Esophagus muscularis mucosa (tissue), 4 donors: ENCODE measurements at regions of chr12 and their contacts with region 1.

Region 1: DNA sequence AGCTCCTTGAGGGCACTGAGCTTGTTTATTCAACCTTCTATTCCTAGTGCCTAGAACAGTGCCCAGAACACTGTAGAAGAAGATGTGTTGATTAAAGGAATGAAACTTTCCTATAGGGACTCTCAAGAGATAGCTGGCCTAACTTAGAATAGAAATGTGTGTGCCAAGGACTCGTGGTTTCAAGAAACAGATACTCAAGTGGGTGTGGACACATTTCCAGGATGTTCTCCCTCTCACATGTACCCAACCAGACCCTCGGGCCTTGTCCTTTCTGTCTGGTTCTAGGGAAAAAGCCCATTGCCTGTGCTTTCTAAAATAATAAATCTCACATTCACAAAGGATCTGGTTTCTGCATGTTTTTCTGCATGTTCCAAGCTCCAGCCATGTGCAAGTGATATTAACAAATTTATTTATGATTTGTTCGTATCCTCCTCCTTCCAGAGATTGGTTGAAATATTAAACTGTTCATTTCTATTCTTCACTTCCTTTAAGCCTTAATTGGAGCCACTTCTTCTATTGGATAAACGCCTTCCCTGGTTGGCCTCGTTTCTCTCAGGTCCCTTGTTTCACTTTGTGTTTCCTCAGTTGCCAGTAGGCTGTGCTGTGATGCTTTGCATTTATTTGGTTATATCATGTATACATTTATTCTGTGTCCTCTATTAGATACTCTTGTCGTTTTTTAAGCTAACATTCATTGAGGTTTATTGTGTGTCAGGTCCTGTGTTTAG is 89.8 kb downstream of the CRADD start:
- DNase-seq: no peak
- H3K4me3 ChIP-seq: no peak overlapping the region
- H3K27ac ChIP-seq: peak overlapping the region; percentile 45 to 62 (median 53)
- H3K4me1 ChIP-seq: peaks cover 20 to 34% (median 26%) of the 10 kb centered on the region in 4 donors
- H3K27me3 ChIP-seq: no peaks in the 10 kb centered on the region
- CTCF ChIP-seq: peak; percentile 56 to 72 (median 67)
- EP300 ChIP-seq: no peak
- POLR2A ChIP-seq: no peak

Region 2: DNA sequence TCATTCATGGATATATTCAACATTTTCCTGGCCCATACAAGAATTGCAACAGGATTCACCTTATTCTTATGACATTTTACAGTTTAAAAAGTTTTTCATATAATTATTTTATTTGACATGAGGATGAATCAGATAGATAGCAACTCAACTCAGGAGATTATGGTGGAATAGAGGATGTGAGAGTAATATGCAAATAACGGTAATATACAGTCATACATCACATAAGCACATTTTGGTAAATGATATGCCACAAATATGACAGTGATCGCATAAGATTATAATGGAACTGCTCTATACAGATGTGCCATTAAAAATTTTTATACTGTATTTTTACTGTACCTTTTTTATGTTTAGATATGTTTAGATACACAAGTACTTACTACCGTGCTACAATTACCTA is 113.9 kb before region 1 on chr12:
- intact Hi-C with region 1: no loop called
- DNase-seq: no peak
- H3K4me3 ChIP-seq: no peak overlapping the region
- H3K27ac ChIP-seq: no peak overlapping the region
- H3K4me1 ChIP-seq: no peaks in the 10 kb centered on the region
- H3K27me3 ChIP-seq: no peaks in the 10 kb centered on the region
- CTCF ChIP-seq: no peak
- EP300 ChIP-seq: no peak
- POLR2A ChIP-seq: no peak

Region 3: GRCh38 chr12:93979189-93979588 is 212.2 kb after region 1 on chr12:
- intact Hi-C with region 1: loop called (anchors 2 kb)
- DNase-seq: no peak
- H3K4me3 ChIP-seq: no peak overlapping the region
- H3K27ac ChIP-seq: no peak overlapping the region
- H3K4me1 ChIP-seq: peaks cover 0 to 11% (median 7%) of the 10 kb centered on the region in 4 donors
- H3K27me3 ChIP-seq: no peaks in the 10 kb centered on the region
- CTCF ChIP-seq: peak; percentile 48 to 56 (median 56)
- EP300 ChIP-seq: no peak
- POLR2A ChIP-seq: no peak

Region 4: DNA sequence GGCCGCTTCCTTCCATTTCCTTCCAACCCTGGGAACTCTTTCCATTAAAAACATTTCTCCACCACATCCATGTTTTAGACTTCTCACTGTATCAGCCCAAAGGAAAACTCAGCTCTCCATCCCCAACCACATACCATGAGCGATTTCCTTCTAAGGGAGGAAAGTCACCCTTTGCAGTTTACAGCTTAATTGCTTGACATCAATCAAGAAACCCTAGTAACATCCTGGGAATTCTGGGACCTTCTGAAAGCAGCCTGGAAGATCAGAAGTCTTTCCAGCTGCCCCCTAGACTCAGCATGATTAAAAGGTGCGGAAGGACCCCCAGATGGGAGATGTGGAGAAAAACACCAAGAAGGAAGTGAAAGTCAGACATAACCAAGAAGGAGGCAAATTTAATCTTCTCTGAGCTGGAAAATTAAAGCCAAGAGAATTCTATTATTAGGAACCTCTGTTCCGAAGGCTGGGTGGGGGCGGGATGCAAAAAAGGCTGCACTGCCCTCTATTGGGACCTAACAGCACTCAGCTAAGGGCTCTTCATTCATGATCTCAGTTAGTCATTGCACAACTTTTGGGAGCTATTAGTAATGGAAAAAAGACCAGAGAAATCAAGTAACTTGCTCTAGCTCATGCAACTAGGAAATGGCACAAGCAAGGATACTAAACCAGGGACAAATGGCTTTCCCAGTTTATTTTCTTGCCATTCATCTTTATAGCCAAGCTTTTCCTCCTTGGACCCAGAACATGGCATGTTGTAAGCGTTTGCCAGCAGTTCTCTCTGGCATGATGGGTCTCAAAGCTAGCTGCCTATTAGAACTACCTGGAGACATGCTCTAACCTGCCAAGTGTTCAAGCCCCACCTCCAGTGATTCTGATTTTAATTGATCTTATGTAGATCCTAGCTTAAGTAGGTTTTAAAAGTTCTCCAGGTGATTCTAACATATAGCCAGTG is 308.3 kb after region 1 on chr12:
- intact Hi-C with region 1: loop called (anchors 10 kb)
- DNase-seq: no peak
- H3K4me3 ChIP-seq: peak overlapping the region in 1 of 4 donors; percentile 6
- H3K27ac ChIP-seq: peak overlapping the region; percentile 74 to 77 (median 76)
- H3K4me1 ChIP-seq: peaks cover 15 to 28% (median 27%) of the 10 kb centered on the region in 4 donors
- H3K27me3 ChIP-seq: no peaks in the 10 kb centered on the region
- CTCF ChIP-seq: peak; percentile 63 to 71 (median 66)
- EP300 ChIP-seq: no peak
- POLR2A ChIP-seq: no peak

Region 5: DNA sequence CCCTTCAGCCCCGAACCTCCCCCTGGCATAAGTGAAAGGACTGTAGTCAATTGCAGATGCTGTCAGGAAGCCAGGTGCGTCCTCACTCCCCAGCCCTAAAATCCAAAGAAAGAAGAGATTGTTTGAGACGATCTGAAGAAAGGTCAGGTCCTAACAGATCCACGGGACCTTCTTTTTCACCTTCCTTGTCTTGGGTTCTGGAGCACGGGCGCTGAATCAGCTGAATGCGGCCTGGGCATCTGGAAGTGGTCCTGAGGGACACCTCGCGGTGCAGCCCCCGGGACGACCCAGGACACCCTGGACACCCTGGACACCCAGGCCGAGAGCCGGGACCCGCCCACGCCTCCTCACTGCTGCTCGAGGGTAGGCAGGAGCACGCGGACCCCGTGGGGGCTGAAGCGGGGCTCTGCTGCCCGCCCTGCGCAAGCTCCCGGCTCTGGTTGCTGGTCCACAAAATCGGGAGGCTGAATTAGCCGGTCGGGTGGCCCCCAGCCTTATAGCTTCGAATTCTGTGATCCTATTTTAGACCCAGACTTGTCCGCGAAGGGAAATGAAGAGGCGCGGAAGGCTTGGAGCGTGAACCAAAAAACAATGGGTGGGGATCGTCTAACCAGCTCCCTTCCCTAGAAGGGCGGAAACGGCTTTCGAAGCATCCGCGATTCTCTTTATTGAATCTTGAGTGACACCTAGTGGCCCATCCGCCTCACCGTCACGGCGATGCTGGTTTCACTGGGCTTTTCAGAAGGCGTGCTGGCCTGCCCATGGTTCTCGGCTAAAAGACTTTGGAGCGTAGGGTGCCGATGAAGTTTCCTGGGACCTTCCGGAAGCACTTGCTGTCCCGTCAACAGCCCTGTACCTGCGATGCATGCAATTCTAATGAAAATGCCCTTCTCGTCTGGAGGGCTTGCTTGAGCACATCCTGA is 335.0 kb after region 1 on chr12:
- intact Hi-C with region 1: loop called (anchors 5 kb)
- DNase-seq: peak; percentile 98
- H3K4me3 ChIP-seq: peak overlapping the region; percentile 58 to 82 (median 64)
- H3K27ac ChIP-seq: peak overlapping the region; percentile 22 to 60 (median 56)
- H3K4me1 ChIP-seq: peaks cover 13 to 17% (median 15%) of the 10 kb centered on the region in 4 donors
- H3K27me3 ChIP-seq: peaks cover 0 to 15% (median 0%) of the 10 kb centered on the region in 4 donors
- CTCF ChIP-seq: peak; percentile 83 to 88 (median 87)
- EP300 ChIP-seq: no peak
- POLR2A ChIP-seq: no peak

Region 6: GRCh38 chr12:94123127-94123526 is 356.2 kb after region 1 on chr12:
- intact Hi-C with region 1: no loop called
- DNase-seq: no peak
- H3K4me3 ChIP-seq: no peak overlapping the region
- H3K27ac ChIP-seq: no peak overlapping the region
- H3K4me1 ChIP-seq: no peaks in the 10 kb centered on the region
- H3K27me3 ChIP-seq: no peaks in the 10 kb centered on the region
- CTCF ChIP-seq: no peak
- EP300 ChIP-seq: no peak
- POLR2A ChIP-seq: no peak